ENCODE measurements at regions of chr5 and their contacts with region 1.

Region 1: DNA sequence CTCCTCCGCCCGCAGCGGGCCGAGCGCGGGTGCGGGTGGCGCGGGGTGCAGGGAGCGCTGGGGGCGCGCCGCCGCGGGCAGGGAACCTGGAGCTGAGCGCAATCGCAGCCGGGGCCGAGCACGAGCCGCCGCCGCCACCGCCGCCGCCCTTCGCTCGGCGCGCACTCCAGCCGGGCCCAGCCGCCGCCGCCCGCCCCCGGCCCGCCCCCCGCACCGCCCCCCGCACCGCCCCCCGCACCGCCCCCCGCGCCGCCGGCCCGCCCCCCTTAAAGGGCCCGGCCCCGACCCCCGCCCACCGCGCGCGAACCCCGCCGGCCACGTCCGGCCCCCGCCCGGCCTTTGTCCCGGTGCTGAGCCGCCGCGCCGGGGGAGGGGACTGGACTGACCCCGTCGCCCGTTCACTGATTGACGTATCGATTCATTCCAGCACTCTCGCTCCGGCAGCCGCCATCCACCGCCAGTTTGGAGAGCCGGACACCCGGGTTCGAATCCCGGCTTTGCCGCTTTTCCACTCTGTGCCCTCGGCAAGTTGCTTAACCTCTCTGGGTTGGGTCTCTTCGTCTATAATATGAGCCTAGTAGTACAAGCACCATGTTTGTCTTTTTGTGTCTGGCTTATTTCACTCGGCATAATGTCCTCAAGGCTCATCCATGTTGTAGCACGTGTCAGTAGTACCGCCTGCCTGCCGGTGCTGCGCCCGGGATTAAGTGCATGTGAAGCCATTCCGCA is at the start of gene SH3PXD2B:
- DNase-seq: peak; percentile 52
- ATAC-seq: peak; percentile 59
- H3K4me3 ChIP-seq: peak within 1 kb of the TSS; percentile 68 to 81 (median 80)
- H3K27ac ChIP-seq: peak within 1 kb of the TSS; percentile 48
- H3K4me1 ChIP-seq: peaks cover 53% of the 10 kb centered on the region
- H3K27me3 ChIP-seq: no peaks in the 10 kb centered on the region; a peak in 2 of 5 replicates
- CTCF ChIP-seq: no peak
- EP300 ChIP-seq: no peak
- POLR2A ChIP-seq: peak in 1 of 2 experiments; percentile 66; a peak in 2 of 4 replicates
- RAD21 ChIP-seq: no peak; the same call in 1 of the 2 replicates
- total RNA-seq, gene SH3PXD2B: 3.4 and 3.8 TPM in 2 replicates

Region 2: GRCh38 chr5:171310819-171311697 is 1143.5 kb before region 1 on chr5:
- CTCF ChIA-PET with region 1: no interaction called
- POLR2A ChIA-PET with region 1: no interaction called
- in situ Hi-C with region 1: no loop called
- intact Hi-C with region 1: no loop called
- DNase-seq: no peak
- ATAC-seq: peak; percentile 71
- H3K4me3 ChIP-seq: peak overlapping the region in 1 of 3 experiments; percentile 10; a peak in 1 of 6 replicates
- H3K27ac ChIP-seq: no peak overlapping the region
- H3K4me1 ChIP-seq: no peaks in the 10 kb centered on the region
- H3K27me3 ChIP-seq: peaks cover 6 to 59% of the 10 kb centered on the region in 2 experiments; a peak in 4 of 5 replicates
- CTCF ChIP-seq: no peak
- EP300 ChIP-seq: no peak
- POLR2A ChIP-seq: no peak
- RAD21 ChIP-seq: no peak

Region 3: GRCh38 chr5:172350212-172351181 is 104.0 kb before region 1 on chr5:
- CTCF ChIA-PET with region 1: no interaction called
- POLR2A ChIA-PET with region 1: no interaction called
- in situ Hi-C with region 1: no loop called
- intact Hi-C with region 1: loop called (anchors 1 kb)
- DNase-seq: no peak
- ATAC-seq: no peak
- H3K4me3 ChIP-seq: no peak overlapping the region
- H3K27ac ChIP-seq: no peak overlapping the region
- H3K4me1 ChIP-seq: peaks cover 34% of the 10 kb centered on the region
- H3K27me3 ChIP-seq: no peaks in the 10 kb centered on the region
- CTCF ChIP-seq: no peak
- EP300 ChIP-seq: no peak
- POLR2A ChIP-seq: no peak
- RAD21 ChIP-seq: no peak

Region 4: GRCh38 chr5:172479044-172479783 is 24.7 kb after region 1 on chr5:
- CTCF ChIA-PET with region 1: no interaction called
- POLR2A ChIA-PET with region 1: no interaction called
- in situ Hi-C with region 1: no loop called
- intact Hi-C with region 1: no loop called
- DNase-seq: peak; percentile 89
- ATAC-seq: peak; percentile 98
- H3K4me3 ChIP-seq: no peak overlapping the region
- H3K27ac ChIP-seq: no peak overlapping the region
- H3K4me1 ChIP-seq: no peaks in the 10 kb centered on the region
- H3K27me3 ChIP-seq: peaks cover 0 to 5% of the 10 kb centered on the region in 2 experiments; a peak in 1 of 5 replicates
- CTCF ChIP-seq: peak; percentile 95
- EP300 ChIP-seq: no peak
- POLR2A ChIP-seq: no peak
- RAD21 ChIP-seq: peak; percentile 96